Left ventricle myocardium inferior (tissue), 1 donor: ENCODE measurements at regions of chr10 and their contacts with region 1.

Region 1: DNA sequence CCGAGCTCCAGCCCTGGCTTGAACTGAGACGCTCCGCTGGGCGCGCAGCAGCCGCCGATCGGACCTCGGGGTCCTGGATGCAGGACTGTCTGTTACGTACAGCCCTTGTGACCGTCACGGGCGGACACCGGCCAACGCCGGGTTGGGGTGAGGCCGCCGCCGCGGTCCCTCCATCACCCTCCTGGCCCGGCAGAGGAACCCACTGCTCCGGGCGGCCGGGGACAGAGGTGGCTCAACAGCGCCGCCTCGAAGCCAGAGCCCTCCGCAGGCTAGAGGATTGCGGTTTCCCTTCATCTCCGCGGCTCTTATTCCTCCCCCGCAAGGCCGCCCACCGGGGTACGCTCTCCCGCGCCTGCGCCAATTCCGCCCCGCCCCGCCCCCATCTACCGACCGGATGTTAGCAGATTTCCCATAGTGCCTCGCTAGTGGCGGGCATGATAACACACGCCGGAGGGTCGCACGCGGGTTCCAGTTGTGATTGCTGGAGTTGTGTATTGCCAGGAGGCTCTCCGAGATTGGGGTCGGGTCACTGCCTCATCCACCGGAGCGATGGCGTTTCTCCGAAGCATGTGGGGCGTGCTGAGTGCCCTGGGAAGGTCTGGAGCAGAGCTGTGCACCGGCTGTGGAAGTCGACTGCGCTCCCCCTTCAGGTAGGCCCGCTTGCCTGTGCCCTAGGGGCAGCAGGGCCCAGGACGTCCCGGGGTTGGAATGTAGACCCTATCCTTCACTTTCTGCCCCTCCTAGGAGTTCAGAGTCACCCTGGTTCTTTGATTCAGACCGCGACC is at the start of gene TFAM:
- DNase-seq: peak; percentile 98
- H3K4me3 ChIP-seq: peak within 1 kb of the TSS; percentile 79
- H3K27ac ChIP-seq: peak within 1 kb of the TSS; percentile 91
- H3K4me1 ChIP-seq: peaks cover 39% of the 10 kb centered on the region
- H3K27me3 ChIP-seq: no peaks in the 10 kb centered on the region
- CTCF ChIP-seq: peak; percentile 73
- total RNA-seq, gene TFAM: 29.8 TPM

Region 2: GRCh38 chr10:58209669-58210068 is 175.5 kb before region 1 on chr10:
- intact Hi-C with region 1: loop called (anchors 10 kb)
- DNase-seq: peak; percentile 51
- H3K4me3 ChIP-seq: no peak overlapping the region
- H3K27ac ChIP-seq: no peak overlapping the region
- H3K4me1 ChIP-seq: peaks cover 3% of the 10 kb centered on the region
- H3K27me3 ChIP-seq: no peaks in the 10 kb centered on the region
- CTCF ChIP-seq: no peak

Region 3: GRCh38 chr10:58334817-58335305 is 50.3 kb before region 1 on chr10 and contains the start of gene UBE2D1:
- intact Hi-C with region 1: loop called (anchors 10 kb)
- DNase-seq: peak; percentile 94
- H3K4me3 ChIP-seq: peak within 1 kb of the TSS; percentile 97
- H3K27ac ChIP-seq: peak within 1 kb of the TSS; percentile 96
- H3K4me1 ChIP-seq: peaks cover 56% of the 10 kb centered on the region
- H3K27me3 ChIP-seq: no peaks in the 10 kb centered on the region
- CTCF ChIP-seq: peak; percentile 55
- total RNA-seq, gene UBE2D1: 56.0 TPM